ENCODE measurements at regions of chr6 and their contacts with region 1.

Region 1: DNA sequence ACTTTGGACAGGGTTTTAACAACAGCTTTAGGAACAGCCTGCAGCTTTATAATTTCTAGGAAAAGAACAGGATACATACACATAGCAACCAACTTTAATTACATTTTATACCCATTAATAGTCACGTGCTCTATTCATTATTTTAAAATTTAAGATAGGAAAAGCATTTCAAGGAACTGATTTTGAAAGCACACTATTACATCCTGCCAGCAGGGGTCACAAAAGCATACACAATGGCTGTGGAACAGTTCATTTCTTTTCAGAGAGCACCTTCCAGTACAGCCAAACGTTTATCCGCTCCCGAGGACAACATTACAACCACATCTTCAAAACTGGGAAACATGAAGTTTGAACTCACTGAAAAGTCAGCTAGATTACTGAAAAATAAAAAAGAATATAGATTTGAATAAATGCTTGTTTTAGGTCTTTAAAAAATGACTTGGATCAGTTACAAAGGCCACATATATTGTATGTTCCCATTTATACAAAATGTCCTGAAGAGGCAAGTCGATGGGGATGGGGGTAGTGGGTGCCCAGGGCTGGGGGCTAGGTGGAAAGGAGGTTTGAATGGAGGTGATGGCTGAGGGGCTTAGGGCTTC is 104.6 kb upstream of the EXOC2 start:
- DNase-seq: peak; percentile 46
- H3K4me3 ChIP-seq: no peak overlapping the region
- H3K27ac ChIP-seq: no peak overlapping the region
- H3K4me1 ChIP-seq: no peaks in the 10 kb centered on the region
- H3K27me3 ChIP-seq: peaks cover 47% of the 10 kb centered on the region
- CTCF ChIP-seq: peak; percentile 73 to 84 (median 74)
- EP300 ChIP-seq: no peak
- POLR2A ChIP-seq: no peak

Region 2: DNA sequence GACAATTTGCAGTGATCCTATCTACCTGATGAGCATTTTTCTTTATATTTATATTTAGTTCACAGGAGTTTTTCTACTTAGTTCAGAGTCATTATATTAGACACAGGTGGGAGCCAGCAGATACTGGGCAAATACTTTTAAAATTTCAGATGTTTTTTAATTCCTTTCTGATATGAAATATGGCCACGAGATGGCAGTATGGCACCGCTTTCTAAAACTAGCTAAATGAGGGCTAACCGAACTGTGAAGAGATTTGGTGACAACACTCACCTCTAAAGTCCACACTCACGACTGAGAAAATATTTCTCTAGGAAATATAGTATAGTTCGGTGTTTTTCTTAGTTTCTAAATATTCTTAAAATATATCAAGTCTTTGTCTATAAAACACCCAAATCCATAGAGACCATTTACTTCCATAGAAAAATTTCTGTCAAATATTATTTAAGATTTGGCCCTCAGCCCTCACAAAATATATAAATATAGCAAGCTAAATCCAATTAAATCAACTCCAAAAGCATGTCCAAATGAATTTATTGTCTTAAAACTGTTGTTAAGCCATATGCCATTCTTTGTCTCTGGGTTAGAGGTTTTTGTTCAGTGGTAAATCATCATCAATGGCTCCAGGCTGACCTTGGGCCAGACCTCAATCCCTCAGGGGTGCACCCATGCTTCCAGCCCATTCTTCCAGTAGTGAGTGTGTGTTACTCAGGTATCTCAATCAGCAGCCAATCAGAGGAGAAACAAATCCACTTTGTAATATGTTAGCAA is 204.3 kb before region 1 on chr6:
- in situ Hi-C with region 1: loop called in 2 of 4 experiments (anchors 10 to 25 kb)
- intact Hi-C with region 1: no loop called
- DNase-seq: peak; percentile 57
- H3K4me3 ChIP-seq: no peak overlapping the region
- H3K27ac ChIP-seq: peak overlapping the region; percentile 13 to 64 (median 44)
- H3K4me1 ChIP-seq: peaks cover 0 to 3% (median 0%) of the 10 kb centered on the region in 4 donors
- H3K27me3 ChIP-seq: no peaks in the 10 kb centered on the region
- CTCF ChIP-seq: peak; percentile 68 to 81 (median 73)
- EP300 ChIP-seq: no peak
- POLR2A ChIP-seq: no peak

Region 3: DNA sequence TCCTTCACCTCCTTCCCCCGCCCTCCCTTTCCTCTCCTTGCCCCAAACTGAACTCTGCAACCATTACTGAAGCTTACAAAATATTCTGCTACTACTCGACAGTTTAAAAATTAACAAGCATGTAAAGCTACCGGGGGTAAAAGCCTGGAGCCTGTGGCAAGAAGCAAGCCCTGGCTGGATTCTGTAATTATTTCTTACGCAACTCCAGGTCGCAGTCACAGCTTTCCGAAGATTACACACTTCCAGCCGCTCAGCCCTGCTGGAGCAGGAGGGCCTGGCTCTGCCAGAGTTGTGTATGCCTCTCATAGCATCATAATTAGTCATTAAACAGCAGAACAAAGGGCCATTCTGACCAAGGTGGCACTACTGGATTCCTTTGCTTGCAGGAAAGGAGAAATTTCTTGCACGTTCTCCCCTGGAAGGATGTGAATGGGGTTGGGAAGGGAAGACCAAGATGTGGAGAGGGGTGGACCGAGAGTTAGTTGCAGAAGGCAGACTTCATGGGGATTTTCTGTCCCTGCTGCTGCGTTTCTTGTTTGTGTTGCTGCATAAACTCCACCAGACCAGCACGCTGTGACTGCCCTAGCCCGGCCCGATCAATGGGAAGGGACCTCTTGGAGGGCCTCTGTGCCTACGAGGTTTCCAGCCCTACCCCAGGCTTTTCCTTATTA is 537.9 kb after region 1 on chr6:
- in situ Hi-C with region 1: loop called in 1 of 4 experiments (anchors 25 kb)
- intact Hi-C with region 1: no loop called
- DNase-seq: peak; percentile 68
- H3K4me3 ChIP-seq: no peak overlapping the region
- H3K27ac ChIP-seq: peak overlapping the region; percentile 3 to 22 (median 18)
- H3K4me1 ChIP-seq: peaks cover 0 to 29% (median 11%) of the 10 kb centered on the region in 4 donors
- H3K27me3 ChIP-seq: peaks cover 7% of the 10 kb centered on the region
- CTCF ChIP-seq: no peak
- EP300 ChIP-seq: no peak
- POLR2A ChIP-seq: no peak

Region 4: GRCh38 chr6:1381481-1382330 is 584.1 kb after region 1 on chr6:
- in situ Hi-C with region 1: no loop called
- intact Hi-C with region 1: loop called (anchors 5 kb)
- DNase-seq: peak; percentile 49
- H3K4me3 ChIP-seq: peak overlapping the region in 3 of 4 donors; percentile 8 to 43 (median 31)
- H3K27ac ChIP-seq: peak overlapping the region; percentile 82 to 88 (median 86)
- H3K4me1 ChIP-seq: peaks cover 5 to 50% (median 33%) of the 10 kb centered on the region in 4 donors
- H3K27me3 ChIP-seq: peaks cover 100% of the 10 kb centered on the region
- CTCF ChIP-seq: peak; percentile 59 to 90 (median 83)
- EP300 ChIP-seq: no peak
- POLR2A ChIP-seq: no peak

Region 5: GRCh38 chr6:1396952-1397868 is 599.6 kb after region 1 on chr6:
- in situ Hi-C with region 1: loop called in 2 of 4 experiments (anchors 5 to 25 kb)
- intact Hi-C with region 1: no loop called
- DNase-seq: peak; percentile 76
- H3K4me3 ChIP-seq: peak overlapping the region in 1 of 4 donors; percentile 4
- H3K27ac ChIP-seq: peak overlapping the region; percentile 82 to 88 (median 86)
- H3K4me1 ChIP-seq: peaks cover 0 to 8% (median 0%) of the 10 kb centered on the region in 4 donors
- H3K27me3 ChIP-seq: peaks cover 82% of the 10 kb centered on the region
- CTCF ChIP-seq: peak; percentile 83 to 97 (median 96)
- EP300 ChIP-seq: peak; percentile 53
- POLR2A ChIP-seq: no peak

Region 6: GRCh38 chr6:1424306-1424928 is 626.8 kb after region 1 on chr6:
- in situ Hi-C with region 1: loop called in 1 of 4 experiments (anchors 25 kb)
- intact Hi-C with region 1: no loop called
- DNase-seq: peak; percentile 51
- H3K4me3 ChIP-seq: no peak overlapping the region
- H3K27ac ChIP-seq: no peak overlapping the region
- H3K4me1 ChIP-seq: no peaks in the 10 kb centered on the region
- H3K27me3 ChIP-seq: peaks cover 5% of the 10 kb centered on the region
- CTCF ChIP-seq: peak; percentile 25 to 55 (median 38)
- EP300 ChIP-seq: no peak
- POLR2A ChIP-seq: no peak

Measured in transverse colon (tissue), 4 donors.